K562 (cell line): ENCODE measurements at regions of chr5 and their contacts with region 1.

Region 1: GRCh38 chr5:90264689-90265544 is 144.6 kb downstream of the CETN3 start:
- DNase-seq: peak; percentile 34 to 82 (median 46)
- ATAC-seq: peak; percentile 87
- H3K4me3 ChIP-seq: no peak overlapping the region
- H3K27ac ChIP-seq: no peak overlapping the region
- H3K4me1 ChIP-seq: no peaks in the 10 kb centered on the region
- H3K27me3 ChIP-seq: no peaks in the 10 kb centered on the region; a peak in 1 of 5 replicates
- CTCF ChIP-seq: peak; percentile 84 to 95 (median 90)
- EP300 ChIP-seq: no peak
- POLR2A ChIP-seq: no peak
- RAD21 ChIP-seq: peak; percentile 93

Region 2: DNA sequence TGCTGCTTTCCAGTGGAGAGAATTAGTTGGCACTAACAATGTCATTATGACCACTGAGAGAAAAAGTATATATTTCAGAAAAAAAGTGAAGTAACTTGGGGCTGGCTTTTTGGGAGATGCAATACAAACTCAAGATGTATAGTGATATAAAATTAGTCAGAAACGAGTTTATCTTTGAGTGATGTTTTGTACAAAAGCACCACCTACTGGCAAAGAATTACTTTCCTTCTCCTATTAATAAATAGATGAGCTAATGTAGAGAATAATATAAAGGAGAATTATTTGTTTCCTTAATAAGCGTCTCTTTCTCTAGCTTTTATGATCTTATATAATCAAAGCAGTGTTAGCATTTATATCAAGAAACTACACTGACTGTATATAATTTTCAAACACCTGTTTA is 1540.7 kb before region 1 on chr5:
- CTCF ChIA-PET with region 1: interaction called, 13 read pairs
- POLR2A ChIA-PET with region 1: no interaction called
- in situ Hi-C with region 1: loop called (anchors 25 kb)
- intact Hi-C with region 1: loop called (anchors 1 kb)
- DNase-seq: no peak
- ATAC-seq: no peak
- H3K4me3 ChIP-seq: no peak overlapping the region
- H3K27ac ChIP-seq: no peak overlapping the region
- H3K4me1 ChIP-seq: no peaks in the 10 kb centered on the region
- H3K27me3 ChIP-seq: no peaks in the 10 kb centered on the region
- CTCF ChIP-seq: peak in 1 of 3 experiments; percentile 33; a peak in 1 of 6 replicates
- EP300 ChIP-seq: no peak
- POLR2A ChIP-seq: no peak
- RAD21 ChIP-seq: peak; percentile 11 to 21; a peak in 2 of 4 replicates

Region 3: GRCh38 chr5:90135779-90136378 is 129.0 kb before region 1 on chr5:
- CTCF ChIA-PET with region 1: no interaction called
- POLR2A ChIA-PET with region 1: no interaction called
- in situ Hi-C with region 1: no loop called
- intact Hi-C with region 1: loop called (anchors 1 kb)
- DNase-seq: peak; percentile 14 to 39 (median 16)
- ATAC-seq: peak; percentile 94
- H3K4me3 ChIP-seq: no peak overlapping the region
- H3K27ac ChIP-seq: no peak overlapping the region
- H3K4me1 ChIP-seq: no peaks in the 10 kb centered on the region; a peak in 1 of 5 replicates
- H3K27me3 ChIP-seq: no peaks in the 10 kb centered on the region
- CTCF ChIP-seq: peak; percentile 52 to 64 (median 53)
- EP300 ChIP-seq: no peak
- POLR2A ChIP-seq: no peak
- RAD21 ChIP-seq: peak; percentile 25 to 64; a peak in 3 of 4 replicates

Region 4: GRCh38 chr5:90386099-90386710 is 121.3 kb after region 1 on chr5:
- CTCF ChIA-PET with region 1: interaction called, 3 read pairs
- POLR2A ChIA-PET with region 1: no interaction called
- in situ Hi-C with region 1: no loop called
- intact Hi-C with region 1: loop called (anchors 5 kb)
- DNase-seq: peak in 1 of 4 experiments; percentile 29
- ATAC-seq: 0 out of 3 replicates have a peak, but pooled peaks have one; percentile 46
- H3K4me3 ChIP-seq: no peak overlapping the region
- H3K27ac ChIP-seq: no peak overlapping the region
- H3K4me1 ChIP-seq: no peaks in the 10 kb centered on the region
- H3K27me3 ChIP-seq: no peaks in the 10 kb centered on the region; a peak in 1 of 5 replicates
- CTCF ChIP-seq: peak in 2 of 3 experiments; percentile 17 to 67; a peak in 4 of 6 replicates
- EP300 ChIP-seq: no peak
- POLR2A ChIP-seq: no peak
- RAD21 ChIP-seq: peak; percentile 45 to 70; a peak in 3 of 4 replicates

Region 5: DNA sequence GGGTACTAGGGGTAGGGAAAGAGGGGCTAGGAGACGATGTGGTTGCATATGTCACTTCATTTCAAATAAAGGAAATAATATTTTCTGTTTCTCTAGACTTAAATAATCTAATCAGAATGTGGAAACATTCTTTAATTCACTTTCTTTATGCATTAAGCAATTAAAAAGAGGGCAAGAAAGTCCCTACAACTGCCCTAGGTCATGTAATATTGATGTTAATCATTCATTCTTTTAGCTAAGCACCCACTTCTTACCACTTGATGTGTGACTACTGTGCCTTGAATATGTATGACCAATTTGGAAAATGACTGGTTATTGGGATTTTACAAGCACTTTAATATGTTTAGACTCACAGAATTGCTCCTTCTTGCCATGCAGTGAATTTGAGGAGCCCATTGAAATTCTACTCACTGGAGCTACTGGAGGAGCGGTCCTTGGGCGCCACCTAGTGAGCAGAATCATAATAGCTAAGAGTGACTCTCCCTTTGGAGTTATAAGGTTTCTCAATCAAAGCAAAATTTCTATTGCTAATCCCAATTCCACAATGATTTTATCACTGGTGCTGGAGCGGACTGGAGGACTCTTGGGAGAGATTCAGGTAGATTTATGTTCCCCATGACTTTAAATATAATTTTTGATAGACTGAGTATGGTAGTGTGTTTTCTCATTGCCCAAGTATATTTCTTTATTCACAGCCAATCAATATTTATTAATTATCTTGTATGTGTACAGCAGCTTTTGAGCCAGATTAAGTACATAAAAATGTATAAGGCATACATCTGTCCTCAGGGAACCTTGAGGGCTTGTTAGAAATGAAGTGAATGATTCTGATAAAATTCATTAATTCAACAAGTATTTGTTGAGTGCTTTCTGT is 518.8 kb after region 1 on chr5:
- CTCF ChIA-PET with region 1: no interaction called
- POLR2A ChIA-PET with region 1: no interaction called
- in situ Hi-C with region 1: no loop called
- intact Hi-C with region 1: loop called (anchors 5 kb)
- DNase-seq: peak; percentile 52 to 81 (median 60)
- ATAC-seq: peak; percentile 96
- H3K4me3 ChIP-seq: no peak overlapping the region
- H3K27ac ChIP-seq: no peak overlapping the region
- H3K4me1 ChIP-seq: no peaks in the 10 kb centered on the region
- H3K27me3 ChIP-seq: no peaks in the 10 kb centered on the region
- CTCF ChIP-seq: peak; percentile 73 to 95 (median 85)
- EP300 ChIP-seq: no peak
- POLR2A ChIP-seq: no peak
- RAD21 ChIP-seq: peak; percentile 77 to 84